ENCODE measurements at regions of chr20 and their contacts with region 1.

Region 1: DNA sequence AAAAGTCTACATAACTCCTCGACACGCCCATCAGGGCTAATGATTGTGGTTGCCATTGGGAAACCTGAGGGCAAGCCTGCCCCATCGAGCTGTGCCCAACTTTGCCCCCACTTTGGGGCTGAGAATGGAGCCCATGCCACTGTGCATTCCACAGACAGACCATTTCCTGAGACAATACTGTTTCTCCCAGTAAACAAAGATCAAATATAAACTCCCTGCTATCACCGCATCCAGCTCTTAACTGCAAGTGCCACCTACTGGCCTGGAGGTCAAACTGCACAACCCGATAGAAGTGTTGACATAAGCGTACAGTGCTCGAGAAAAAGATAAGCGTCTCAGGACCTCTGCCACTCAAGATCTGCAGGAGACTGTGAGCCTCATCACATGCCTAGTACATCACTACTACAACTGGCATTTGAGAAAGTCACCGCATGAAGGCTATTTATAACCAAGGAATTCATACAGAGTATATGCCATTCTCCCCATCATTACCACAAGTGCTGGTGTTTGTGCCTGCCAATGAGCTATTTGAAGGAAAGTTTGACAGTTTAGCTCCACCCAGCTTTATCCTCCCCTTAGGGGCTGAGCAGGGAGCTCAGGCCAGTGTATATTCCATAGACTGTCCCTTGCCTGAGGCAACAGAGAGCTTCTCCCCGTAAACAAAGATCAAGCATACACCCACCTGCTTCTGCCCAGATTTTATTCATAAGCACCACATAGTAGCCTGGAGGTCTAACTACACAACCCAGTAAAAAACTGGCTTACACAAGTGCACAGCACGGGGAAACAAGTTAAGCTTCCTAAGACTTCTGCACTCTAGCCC is 4.5 kb upstream of the DEFB126 start:
- H3K4me3 ChIP-seq: no peak overlapping the region
- H3K27ac ChIP-seq: no peak overlapping the region
- H3K4me1 ChIP-seq: no peaks in the 10 kb centered on the region
- CTCF ChIP-seq: no peak

Region 2: DNA sequence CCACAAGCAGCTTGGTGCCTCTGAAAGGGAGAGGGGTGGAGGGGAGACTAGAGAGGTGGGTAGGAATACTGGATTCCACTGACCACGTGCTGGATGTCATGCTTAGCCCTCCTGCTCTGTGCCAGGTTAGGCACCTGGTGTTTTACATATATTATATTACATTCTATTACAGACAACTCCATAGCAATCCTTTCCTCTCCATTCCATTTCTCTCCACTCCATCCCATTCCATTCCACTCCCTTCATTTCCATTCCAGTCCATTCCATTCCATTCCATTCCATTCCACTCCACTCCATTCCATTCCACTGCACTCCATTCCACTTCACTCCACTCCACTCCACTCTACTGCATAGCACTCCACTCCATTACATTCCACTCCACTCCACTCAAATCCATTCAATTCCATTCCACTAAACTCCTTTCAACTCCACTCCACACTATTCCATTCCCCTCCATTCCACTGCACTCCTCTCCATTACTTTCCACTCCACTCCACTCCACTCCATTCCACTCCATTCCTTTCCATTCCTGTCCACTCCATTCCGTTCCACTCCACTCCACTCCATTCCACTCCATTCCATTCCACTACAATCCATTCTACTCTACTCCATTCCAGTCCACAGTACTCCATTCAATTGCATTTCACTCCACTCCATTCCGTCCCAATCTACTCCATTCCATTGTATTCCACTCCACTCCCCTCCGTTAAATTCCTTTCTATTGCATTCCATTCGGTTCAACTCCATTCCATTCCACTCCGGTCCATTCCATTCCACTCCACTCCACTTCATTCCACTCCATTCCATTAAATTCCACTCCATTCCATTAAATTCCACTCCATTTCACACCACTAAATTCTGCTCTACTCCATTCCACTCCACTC is 77.6 kb before region 1 on chr20:
- CTCF ChIA-PET with region 1: no interaction called
- POLR2A ChIA-PET with region 1: no interaction called
- H3K4me3 ChIP-seq: no peak overlapping the region
- H3K27ac ChIP-seq: no peak overlapping the region
- H3K4me1 ChIP-seq: no peaks in the 10 kb centered on the region
- CTCF ChIP-seq: no peak

Region 3: GRCh38 chr20:117518-117917 is 20.4 kb before region 1 on chr20:
- CTCF ChIA-PET with region 1: interaction called, 14 read pairs
- POLR2A ChIA-PET with region 1: no interaction called
- H3K4me3 ChIP-seq: no peak overlapping the region
- H3K27ac ChIP-seq: no peak overlapping the region
- H3K4me1 ChIP-seq: no peaks in the 10 kb centered on the region
- CTCF ChIP-seq: no peak

Measured in HEK293 (cell line).